Activated CD4-positive, alpha-beta T cell treated with anti-CD3 and anti-CD28 coated beads, Interleukin-2, amount 10 ng/mL, durations not matched to agents 24 days and 14 days (primary cell): ENCODE measurements at regions of chr2 and their contacts with region 1.

Region 1: DNA sequence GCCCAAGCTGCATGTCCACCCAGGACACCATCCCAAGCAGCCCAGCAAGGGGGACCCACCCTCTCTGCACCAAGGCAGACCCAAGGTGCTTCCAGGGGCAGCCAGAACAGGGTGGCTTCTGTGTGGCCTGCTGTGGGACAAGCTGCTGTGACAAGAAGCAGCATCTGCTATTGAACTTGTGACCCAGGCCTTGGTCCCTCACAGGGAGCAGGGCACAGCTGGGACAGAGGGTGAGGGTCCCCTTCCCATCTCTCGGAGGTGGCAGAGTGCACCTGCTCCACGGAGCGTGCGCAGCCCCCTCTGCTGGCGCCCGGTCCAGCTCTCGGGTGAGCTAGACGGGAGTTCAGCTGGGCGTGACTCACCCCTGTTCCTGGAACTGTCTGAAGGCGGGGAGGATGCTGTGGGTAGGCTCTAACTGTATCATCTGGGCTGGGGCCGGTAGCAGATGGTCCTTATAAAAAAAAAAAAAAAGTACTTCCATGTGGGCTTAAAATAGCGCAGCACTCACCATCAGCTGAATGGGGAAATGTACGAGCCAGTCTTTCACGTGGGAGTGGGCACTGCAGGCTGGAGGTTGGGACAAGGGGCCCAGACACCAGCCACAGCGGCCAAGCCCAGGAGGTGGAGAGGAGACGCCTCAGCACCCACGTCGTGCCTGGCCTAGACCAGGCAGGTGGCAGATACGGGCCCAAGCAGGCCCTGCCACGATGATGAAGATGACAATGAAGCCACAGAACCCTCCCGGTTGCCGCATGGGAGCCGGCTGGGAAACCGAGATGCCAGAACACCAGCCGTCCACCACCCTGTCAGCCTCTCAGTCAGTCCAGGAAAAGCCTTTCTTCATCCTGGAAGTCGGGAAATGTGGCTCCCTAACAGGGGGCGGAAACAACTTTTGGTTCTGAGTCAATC is 136.8 kb upstream of the ID2 start:
- DNase-seq: peak; percentile 95
- H3K4me3 Mint-ChIP-seq: peak overlapping the region; percentile 64
- H3K27ac Mint-ChIP-seq: peak overlapping the region; percentile 99
- H3K4me1 Mint-ChIP-seq: peaks cover 80% of the 10 kb centered on the region
- H3K27me3 Mint-ChIP-seq: no peaks in the 10 kb centered on the region

Region 2: GRCh38 chr2:7450188-7450832 is 1094.7 kb before region 1 on chr2:
- intact Hi-C with region 1: loop called (anchors 1 kb)
- DNase-seq: peak; percentile 90
- H3K4me3 Mint-ChIP-seq: peak overlapping the region; percentile 58
- H3K27ac Mint-ChIP-seq: peak overlapping the region; percentile 100
- H3K4me1 Mint-ChIP-seq: peaks cover 70% of the 10 kb centered on the region
- H3K27me3 Mint-ChIP-seq: no peaks in the 10 kb centered on the region

Region 3: GRCh38 chr2:7773362-7774360 is 771.4 kb before region 1 on chr2:
- intact Hi-C with region 1: loop called (anchors 1 kb)
- DNase-seq: peak; percentile 79
- H3K4me3 Mint-ChIP-seq: peak overlapping the region; percentile 25
- H3K27ac Mint-ChIP-seq: peak overlapping the region; percentile 84
- H3K4me1 Mint-ChIP-seq: peaks cover 36% of the 10 kb centered on the region
- H3K27me3 Mint-ChIP-seq: no peaks in the 10 kb centered on the region

Region 4: GRCh38 chr2:8049851-8050571 is 495.0 kb before region 1 on chr2:
- intact Hi-C with region 1: loop called (anchors 1 kb)
- DNase-seq: peak; percentile 81
- H3K4me3 Mint-ChIP-seq: peak overlapping the region; percentile 7
- H3K27ac Mint-ChIP-seq: peak overlapping the region; percentile 84
- H3K4me1 Mint-ChIP-seq: peaks cover 23% of the 10 kb centered on the region
- H3K27me3 Mint-ChIP-seq: no peaks in the 10 kb centered on the region

Region 5: DNA sequence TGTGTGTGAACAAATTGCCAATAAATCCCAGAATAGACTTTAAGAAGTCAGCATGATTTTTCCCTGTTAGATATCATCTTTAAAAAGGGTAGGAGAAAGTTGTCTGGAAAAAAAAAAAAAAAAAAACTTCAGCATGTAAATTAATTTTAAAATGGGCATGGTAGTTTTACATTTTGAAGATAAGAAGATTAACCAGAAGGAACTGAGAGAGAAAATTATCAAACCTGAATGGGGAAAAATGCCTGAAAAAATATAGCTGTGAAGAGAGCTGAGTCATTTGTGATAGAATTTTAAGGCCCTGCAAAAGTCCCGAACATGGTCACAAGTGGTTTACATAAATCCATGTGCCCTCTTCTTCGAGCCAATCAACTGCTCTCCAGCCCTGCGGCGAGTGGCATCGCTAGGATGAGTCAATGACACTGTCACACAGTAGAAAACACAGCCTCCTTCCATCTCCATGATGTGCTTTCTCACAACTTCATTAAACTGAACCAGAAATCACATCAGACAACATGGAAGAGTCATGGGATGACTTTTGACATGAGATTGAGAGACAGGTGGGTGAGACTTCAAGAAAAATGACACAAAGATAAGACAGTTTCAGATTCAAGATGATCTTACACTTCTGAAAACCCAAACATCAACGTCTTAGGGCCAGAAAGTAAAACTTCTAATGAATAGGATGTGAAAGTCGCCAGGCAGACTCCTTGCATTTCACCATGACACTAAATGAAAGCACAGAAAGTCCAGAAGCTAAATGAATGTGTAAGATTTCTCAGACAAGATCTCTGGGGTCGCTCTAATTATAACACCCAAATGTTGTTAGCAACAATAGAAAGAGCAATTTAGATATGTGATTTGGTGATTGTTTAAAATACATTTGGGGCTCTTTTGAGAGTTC is 136.2 kb before region 1 on chr2:
- intact Hi-C with region 1: loop called (anchors 1 kb)
- DNase-seq: peak; percentile 82
- H3K4me3 Mint-ChIP-seq: peak overlapping the region; percentile 11
- H3K27ac Mint-ChIP-seq: peak overlapping the region; percentile 85
- H3K4me1 Mint-ChIP-seq: peaks cover 26% of the 10 kb centered on the region
- H3K27me3 Mint-ChIP-seq: peaks cover 5% of the 10 kb centered on the region

Region 6: DNA sequence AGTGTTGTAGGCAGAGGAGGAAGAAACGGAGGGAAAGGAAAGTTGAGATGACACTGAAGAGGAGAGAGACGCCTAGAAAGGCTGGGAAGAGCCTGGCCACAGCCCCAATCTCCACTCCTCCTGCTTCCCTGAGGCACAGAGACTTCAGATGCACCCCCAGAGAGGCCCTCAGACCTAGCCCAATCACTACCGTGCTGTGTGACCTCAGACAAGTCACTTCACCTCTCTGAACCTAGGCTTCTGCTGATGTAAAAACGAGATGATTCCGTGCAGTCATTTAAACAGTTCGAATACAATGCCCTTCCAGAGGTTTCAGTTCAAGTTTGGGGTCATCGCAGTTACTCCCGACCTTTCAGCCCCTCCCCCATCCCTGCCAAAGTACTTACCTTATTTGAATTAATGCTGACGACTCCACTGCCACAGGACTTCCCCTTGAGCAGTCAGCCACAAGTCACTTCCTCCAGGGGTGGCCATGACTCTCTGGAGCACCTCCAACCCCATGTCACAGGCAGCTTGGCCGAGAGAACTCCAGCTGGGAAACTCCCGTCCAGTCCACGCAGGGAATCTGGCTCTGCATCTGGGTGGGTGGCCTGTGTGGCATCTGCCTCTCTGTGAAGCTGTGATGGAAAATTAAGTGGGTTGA is 31.6 kb after region 1 on chr2:
- intact Hi-C with region 1: loop called (anchors 2 kb)
- DNase-seq: peak; percentile 74
- H3K4me3 Mint-ChIP-seq: peak overlapping the region; percentile 8
- H3K27ac Mint-ChIP-seq: peak overlapping the region; percentile 18
- H3K4me1 Mint-ChIP-seq: peaks cover 43% of the 10 kb centered on the region
- H3K27me3 Mint-ChIP-seq: peaks cover 4% of the 10 kb centered on the region